Transverse colon (tissue), 4 donors: ENCODE measurements at regions of chr9 and their contacts with region 1.

Region 1: GRCh38 chr9:130682490-130683121 is 11.0 kb upstream of the EXOSC2 start:
- DNase-seq: peak; percentile 86
- H3K4me3 ChIP-seq: peak overlapping the region in 3 of 4 donors; percentile 41 to 64 (median 53)
- H3K27ac ChIP-seq: peak overlapping the region in 1 of 4 donors; percentile 51
- H3K4me1 ChIP-seq: peaks cover 11 to 16% (median 15%) of the 10 kb centered on the region in 4 donors
- H3K27me3 ChIP-seq: peaks cover 20% of the 10 kb centered on the region
- CTCF ChIP-seq: peak; percentile 76 to 90 (median 83)
- EP300 ChIP-seq: no peak
- POLR2A ChIP-seq: no peak

Region 2: DNA sequence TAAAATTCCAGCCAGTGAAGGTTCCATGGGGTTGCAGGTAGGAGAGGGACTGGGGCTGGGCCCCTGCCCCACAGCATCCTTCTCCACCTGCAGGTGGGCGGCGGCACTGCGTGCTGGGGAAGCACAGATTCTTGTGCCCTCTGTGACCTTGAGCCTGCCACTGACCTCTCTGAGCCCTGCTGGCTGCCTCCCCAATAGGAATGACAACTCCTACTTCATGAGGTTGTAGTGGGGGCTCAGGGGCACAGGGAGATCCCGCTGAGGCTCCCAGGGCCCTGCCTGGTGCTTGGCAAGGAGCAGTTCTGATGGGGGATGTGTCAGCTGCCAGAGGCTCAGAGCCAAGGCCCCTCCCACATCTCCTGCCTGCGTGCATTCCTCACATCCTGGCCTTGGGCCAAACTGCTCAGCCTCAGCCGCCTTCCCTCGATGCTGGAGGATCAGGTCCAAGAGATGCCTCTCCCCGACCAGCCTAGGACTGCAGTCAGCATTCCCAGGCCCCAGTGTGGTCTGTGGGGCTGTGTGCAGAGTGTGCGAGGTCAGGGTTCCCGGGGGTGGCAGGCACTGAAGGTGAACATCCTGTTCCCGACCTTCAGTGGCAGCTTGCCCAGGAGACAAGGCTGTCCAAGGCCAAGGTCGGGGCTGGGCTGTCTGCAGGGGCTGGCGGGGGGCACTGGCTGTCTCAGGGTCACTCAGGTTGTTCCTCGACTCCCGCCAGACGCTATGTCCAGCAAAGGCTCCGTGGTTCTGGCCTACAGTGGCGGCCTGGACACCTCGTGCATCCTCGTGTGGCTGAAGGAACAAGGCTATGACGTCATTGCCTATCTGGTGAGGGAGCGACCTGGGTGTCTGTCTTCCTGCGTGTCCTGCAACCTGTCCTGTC is 230.9 kb before region 1 on chr9:
- in situ Hi-C with region 1: loop called in 3 of 4 experiments (anchors 5 to 10 kb)
- intact Hi-C with region 1: no loop called
- DNase-seq: peak; percentile 87
- H3K4me3 ChIP-seq: no peak overlapping the region
- H3K27ac ChIP-seq: peak overlapping the region; percentile 56 to 79 (median 74)
- H3K4me1 ChIP-seq: peaks cover 27 to 43% (median 38%) of the 10 kb centered on the region in 4 donors
- H3K27me3 ChIP-seq: no peaks in the 10 kb centered on the region
- CTCF ChIP-seq: peak; percentile 40 to 66 (median 44)
- EP300 ChIP-seq: no peak
- POLR2A ChIP-seq: peak; percentile 20

Region 3: DNA sequence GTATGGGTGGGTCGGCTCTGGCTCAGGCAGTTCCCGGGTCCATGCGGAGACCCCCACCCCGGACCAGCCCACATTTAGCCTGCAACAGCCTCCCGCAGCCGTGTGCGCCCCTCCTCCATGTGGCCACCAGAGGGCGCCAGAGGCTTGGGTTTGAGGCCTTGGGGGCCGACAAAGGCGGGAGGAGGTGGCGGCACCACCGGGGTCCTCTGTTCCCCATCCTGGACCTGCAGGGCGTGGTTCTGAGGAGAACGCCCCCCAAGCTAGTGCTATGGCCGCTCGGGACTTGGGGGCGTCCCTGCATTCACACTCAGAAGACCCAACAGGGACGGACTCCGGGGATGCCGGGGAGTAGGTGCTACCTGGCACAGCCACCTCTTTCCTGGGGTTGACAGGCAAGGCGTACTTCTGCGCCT is 221.4 kb before region 1 on chr9:
- in situ Hi-C with region 1: loop called (anchors 5 to 10 kb)
- intact Hi-C with region 1: loop called (anchors 2 kb)
- DNase-seq: peak; percentile 63
- H3K4me3 ChIP-seq: no peak overlapping the region
- H3K27ac ChIP-seq: no peak overlapping the region
- H3K4me1 ChIP-seq: no peaks in the 10 kb centered on the region
- H3K27me3 ChIP-seq: no peaks in the 10 kb centered on the region
- CTCF ChIP-seq: peak; percentile 79 to 95 (median 92)
- EP300 ChIP-seq: no peak
- POLR2A ChIP-seq: no peak

Region 4: GRCh38 chr9:130570200-130570599 is 112.4 kb before region 1 on chr9:
- in situ Hi-C with region 1: no loop called
- intact Hi-C with region 1: no loop called
- DNase-seq: no peak
- H3K4me3 ChIP-seq: no peak overlapping the region
- H3K27ac ChIP-seq: no peak overlapping the region
- H3K4me1 ChIP-seq: no peaks in the 10 kb centered on the region
- H3K27me3 ChIP-seq: peaks cover 8% of the 10 kb centered on the region
- CTCF ChIP-seq: no peak
- EP300 ChIP-seq: no peak
- POLR2A ChIP-seq: no peak